CD8-positive, alpha-beta T cell (primary cell): ENCODE measurements at regions of chr12 and their contacts with region 1.

Region 1: GRCh38 chr12:109833307-109834189 is at the start of gene TRPV4:
- DNase-seq: no peak
- ATAC-seq: no peak
- H3K4me3 ChIP-seq: no peak within 1 kb of the TSS
- H3K4me3 Mint-ChIP-seq: peak within 1 kb of the TSS; percentile 44
- H3K27ac ChIP-seq: no peak within 1 kb of the TSS
- H3K27ac Mint-ChIP-seq: no peak within 1 kb of the TSS
- H3K4me1 ChIP-seq: no peaks in the 10 kb centered on the region
- H3K4me1 Mint-ChIP-seq: peaks cover 2% of the 10 kb centered on the region
- H3K27me3 ChIP-seq: peaks cover 0 to 4% of the 10 kb centered on the region in 2 experiments
- H3K27me3 Mint-ChIP-seq: peaks cover 35% of the 10 kb centered on the region
- CTCF ChIP-seq: no peak
- total RNA-seq, gene TRPV4: not detected

Region 2: DNA sequence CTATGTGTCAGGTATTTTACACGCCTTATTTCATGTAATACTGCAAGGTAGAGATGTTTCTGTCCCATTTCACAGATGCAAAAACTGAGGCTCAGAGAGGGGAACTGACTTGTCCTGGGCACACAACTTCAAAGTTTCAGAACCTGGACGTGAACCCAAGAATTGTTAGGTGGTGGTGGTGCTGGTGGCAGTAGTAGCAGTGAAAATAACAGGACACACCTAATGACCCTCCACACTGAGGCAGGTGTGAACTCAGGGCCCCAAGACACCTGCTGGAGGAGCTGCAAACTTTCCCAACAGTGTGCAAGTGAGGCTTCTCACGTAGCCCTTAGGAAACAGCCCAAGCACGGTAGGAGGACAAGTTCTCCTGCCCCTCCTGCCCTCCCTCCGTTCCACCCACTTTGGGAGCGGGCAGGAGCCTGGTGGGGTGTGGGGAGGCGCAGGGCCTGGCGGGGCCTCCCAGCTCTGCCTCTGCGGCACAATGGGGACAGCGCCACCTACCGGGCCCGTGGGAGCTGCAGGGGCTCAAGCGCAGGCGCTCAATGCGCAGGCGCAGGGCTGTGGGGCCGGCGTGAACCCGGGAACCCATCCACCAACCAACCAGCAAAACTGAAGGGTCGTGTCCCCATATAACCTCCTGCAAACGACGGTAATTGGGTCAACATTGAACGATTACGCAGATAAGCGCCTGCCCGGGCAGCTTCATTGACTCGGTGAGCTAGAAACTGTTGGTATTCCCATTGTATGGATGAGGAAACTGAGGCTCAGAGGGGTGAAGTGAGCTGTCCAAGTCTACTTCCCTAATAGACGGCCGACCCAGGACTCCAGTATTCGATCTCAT is 11.7 kb after region 1 on chr12:
- CTCF ChIA-PET with region 1: interaction called, 11 read pairs
- POLR2A ChIA-PET with region 1: interaction called, 3 read pairs
- intact Hi-C with region 1: no loop called
- DNase-seq: peak; percentile 73 to 92 (median 89)
- ATAC-seq: peak; percentile 100
- H3K4me3 ChIP-seq: peak overlapping the region; percentile 19 to 36
- H3K4me3 Mint-ChIP-seq: no peak overlapping the region
- H3K27ac ChIP-seq: no peak overlapping the region
- H3K27ac Mint-ChIP-seq: no peak overlapping the region
- H3K4me1 ChIP-seq: peaks cover 9% of the 10 kb centered on the region
- H3K4me1 Mint-ChIP-seq: peaks cover 3% of the 10 kb centered on the region
- H3K27me3 ChIP-seq: no peaks in the 10 kb centered on the region
- H3K27me3 Mint-ChIP-seq: no peaks in the 10 kb centered on the region
- CTCF ChIP-seq: peak; percentile 98